Activated naive CD4-positive, alpha-beta T cell treated with anti-CD3 and anti-CD28 coated beads, Interleukin-2, amount 10 ng/mL, durations not matched to agents 7 days and 5 days (primary cell): ENCODE measurements at regions of chr10 and their contacts with region 1.

Region 1: GRCh38 chr10:52308251-52309031 is 5.6 kb upstream of the DKK1 start:
- DNase-seq: peak; percentile 28
- H3K4me3 Mint-ChIP-seq: no peak overlapping the region
- H3K27ac Mint-ChIP-seq: no peak overlapping the region
- H3K4me1 Mint-ChIP-seq: no peaks in the 10 kb centered on the region
- H3K27me3 Mint-ChIP-seq: peaks cover 27% of the 10 kb centered on the region

Region 2: GRCh38 chr10:52187521-52188258 is 120.8 kb before region 1 on chr10:
- CTCF ChIA-PET with region 1: no interaction called
- DNase-seq: no peak
- H3K4me3 Mint-ChIP-seq: no peak overlapping the region
- H3K27ac Mint-ChIP-seq: no peak overlapping the region
- H3K4me1 Mint-ChIP-seq: no peaks in the 10 kb centered on the region
- H3K27me3 Mint-ChIP-seq: no peaks in the 10 kb centered on the region

Region 3: DNA sequence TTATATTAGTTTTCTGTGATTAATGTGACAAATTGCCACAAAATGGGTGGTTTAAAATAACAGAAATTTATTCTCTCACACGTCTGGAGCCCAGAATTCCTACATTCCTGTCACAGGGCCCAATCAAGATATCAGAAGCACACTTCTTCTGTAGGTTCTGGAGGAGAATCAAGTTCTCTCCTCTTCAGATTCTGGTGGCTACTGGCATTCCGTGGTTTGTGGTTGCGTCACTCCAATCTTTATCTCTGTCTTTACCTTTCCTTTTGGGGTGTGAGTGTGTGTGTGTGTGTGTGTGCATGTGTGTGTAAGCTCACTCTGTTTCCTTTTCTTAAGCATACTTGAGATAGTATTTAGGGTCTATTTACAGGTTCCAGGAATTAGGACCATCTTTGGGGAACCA is 109.9 kb before region 1 on chr10:
- CTCF ChIA-PET with region 1: no interaction called
- DNase-seq: no peak
- H3K4me3 Mint-ChIP-seq: no peak overlapping the region
- H3K27ac Mint-ChIP-seq: no peak overlapping the region
- H3K4me1 Mint-ChIP-seq: no peaks in the 10 kb centered on the region
- H3K27me3 Mint-ChIP-seq: no peaks in the 10 kb centered on the region

Region 4: GRCh38 chr10:52258799-52259425 is 49.5 kb before region 1 on chr10:
- CTCF ChIA-PET with region 1: no interaction called
- DNase-seq: no peak
- H3K4me3 Mint-ChIP-seq: no peak overlapping the region
- H3K27ac Mint-ChIP-seq: no peak overlapping the region
- H3K4me1 Mint-ChIP-seq: no peaks in the 10 kb centered on the region
- H3K27me3 Mint-ChIP-seq: no peaks in the 10 kb centered on the region

Region 5: GRCh38 chr10:52488606-52489485 is 180.4 kb after region 1 on chr10:
- CTCF ChIA-PET with region 1: interaction called, 16 read pairs
- DNase-seq: no peak
- H3K4me3 Mint-ChIP-seq: no peak overlapping the region
- H3K27ac Mint-ChIP-seq: no peak overlapping the region
- H3K4me1 Mint-ChIP-seq: no peaks in the 10 kb centered on the region
- H3K27me3 Mint-ChIP-seq: no peaks in the 10 kb centered on the region